Naive thymus-derived CD8-positive, alpha-beta T cell (primary cell): ENCODE measurements at regions of chr3 and their contacts with region 1.

Region 1: GRCh38 chr3:18725668-18726407 is 300.7 kb upstream of the SATB1 start:
- DNase-seq: peak in 4 of 10 donors; percentile 13 to 72 (median 69)
- ATAC-seq: peak; percentile 77 to 82
- H3K4me3 Mint-ChIP-seq: peak overlapping the region; percentile 57 to 90 (median 74)
- H3K27ac Mint-ChIP-seq: peak overlapping the region; percentile 93 to 100 (median 96)
- H3K4me1 Mint-ChIP-seq: peaks cover 42 to 77% (median 71%) of the 10 kb centered on the region in 4 donors
- H3K27me3 Mint-ChIP-seq: no peaks in the 10 kb centered on the region

Region 2: DNA sequence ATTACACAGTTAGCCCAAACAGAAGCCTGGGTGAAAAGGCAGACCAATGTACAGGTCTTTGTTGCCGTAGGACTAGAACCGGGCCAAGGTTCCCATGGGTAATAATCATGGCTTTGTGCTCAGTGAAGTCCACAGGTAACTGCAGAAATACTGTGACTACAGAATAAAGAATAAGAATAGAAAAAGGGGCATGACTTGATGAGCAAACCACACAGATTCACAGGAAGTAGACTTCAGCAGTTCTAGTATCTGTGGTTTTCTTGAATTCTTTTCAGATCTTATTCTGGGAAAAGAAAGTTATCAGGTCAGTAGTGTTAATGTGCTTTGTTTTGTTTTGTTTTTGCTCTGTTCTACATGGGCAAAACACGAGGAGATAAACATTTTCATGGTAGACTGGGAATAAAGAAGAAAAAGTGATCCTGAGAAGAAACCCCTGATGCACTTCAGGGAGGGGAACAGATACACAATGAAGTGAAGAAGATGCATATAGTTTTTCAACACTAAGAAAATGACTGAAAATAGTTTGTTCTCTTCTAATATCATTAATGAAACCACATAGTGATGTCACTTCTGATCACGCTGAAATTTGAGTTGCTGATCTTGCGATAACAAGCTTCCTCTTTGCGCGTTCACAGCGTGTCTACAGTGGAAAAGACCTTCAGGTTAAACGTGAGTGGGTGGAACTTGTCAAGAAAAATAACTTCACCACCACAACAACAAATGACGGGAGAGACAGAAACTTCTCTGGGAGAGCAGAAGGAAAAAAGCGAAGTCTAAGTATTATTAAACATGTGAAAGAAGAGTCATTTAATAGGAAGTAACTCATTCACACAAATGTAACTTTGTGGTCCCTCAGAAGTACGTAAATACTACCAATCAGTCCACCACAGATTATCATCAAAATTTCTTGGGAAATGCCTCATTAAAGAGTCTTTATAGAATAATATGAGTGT is 15.1 kb after region 1 on chr3:
- POLR2A ChIA-PET with region 1: interaction called, 102 read pairs
- DNase-seq: peak; percentile 11 to 73 (median 60)
- ATAC-seq: peak; percentile 70 to 77
- H3K4me3 Mint-ChIP-seq: peak overlapping the region; percentile 68 to 90 (median 86)
- H3K27ac Mint-ChIP-seq: peak overlapping the region; percentile 89 to 98 (median 94)
- H3K4me1 Mint-ChIP-seq: peaks cover 48 to 96% (median 87%) of the 10 kb centered on the region in 4 donors
- H3K27me3 Mint-ChIP-seq: no peaks in the 10 kb centered on the region

Region 3: GRCh38 chr3:18758047-18758704 is 32.3 kb after region 1 on chr3:
- POLR2A ChIA-PET with region 1: interaction called, 11 read pairs
- DNase-seq: peak in 8 of 10 donors; percentile 31 to 83 (median 63)
- ATAC-seq: peak; percentile 97 to 98
- H3K4me3 Mint-ChIP-seq: peak overlapping the region in 3 of 10 donors; percentile 1 to 16 (median 14)
- H3K27ac Mint-ChIP-seq: peak overlapping the region; percentile 5 to 89 (median 73)
- H3K4me1 Mint-ChIP-seq: peaks cover 20 to 41% (median 40%) of the 10 kb centered on the region in 4 donors
- H3K27me3 Mint-ChIP-seq: no peaks in the 10 kb centered on the region